PC-3 (cell line): ENCODE measurements at regions of chr3 and their contacts with region 1.

Region 1: GRCh38 chr3:95134693-95135413 is 1072.0 kb downstream of the NSUN3 start:
- DNase-seq: peak; percentile 10
- ATAC-seq: no peak
- H3K4me3 ChIP-seq: no peak overlapping the region
- H3K27ac ChIP-seq: no peak overlapping the region
- H3K4me1 ChIP-seq: no peaks in the 10 kb centered on the region
- H3K27me3 ChIP-seq: no peaks in the 10 kb centered on the region
- CTCF ChIP-seq: 0 out of 2 replicates have a peak, but pooled peaks have one; percentile 15

Region 2: DNA sequence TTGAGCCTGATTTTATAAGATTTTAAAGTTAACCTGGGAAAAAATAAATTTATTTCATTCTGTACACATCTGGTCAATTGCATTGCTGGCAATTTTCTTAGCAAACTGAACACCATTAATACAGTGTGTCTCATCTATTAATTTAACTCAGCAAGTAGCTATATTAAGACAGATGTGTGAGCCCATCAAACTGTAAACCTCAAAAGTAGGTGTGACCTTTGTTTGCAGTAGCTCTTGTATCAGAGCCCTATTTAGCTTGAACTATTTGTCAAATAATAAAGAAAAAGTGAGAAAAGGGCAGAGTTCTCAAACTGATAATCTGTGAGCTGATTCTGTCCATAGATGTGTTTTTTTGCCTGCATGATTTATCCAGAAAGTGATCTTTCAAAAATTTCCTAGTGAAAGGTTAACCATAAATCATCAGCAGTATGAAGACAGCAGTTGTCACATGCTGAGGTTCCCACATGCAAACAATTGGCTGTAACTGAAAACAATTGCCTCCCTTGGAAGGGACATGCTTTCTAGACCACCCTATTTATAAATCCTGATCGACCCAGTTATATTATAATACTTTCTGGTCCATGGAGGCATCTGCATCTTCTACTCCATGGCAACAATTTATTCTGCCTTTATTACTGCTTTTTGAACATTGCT is 425.5 kb before region 1 on chr3:
- CTCF ChIA-PET with region 1: no interaction called
- POLR2A ChIA-PET with region 1: no interaction called
- intact Hi-C with region 1: no loop called
- DNase-seq: no peak
- ATAC-seq: no peak
- H3K4me3 ChIP-seq: no peak overlapping the region
- H3K27ac ChIP-seq: no peak overlapping the region
- H3K4me1 ChIP-seq: no peaks in the 10 kb centered on the region
- H3K27me3 ChIP-seq: no peaks in the 10 kb centered on the region
- CTCF ChIP-seq: no peak

Region 3: DNA sequence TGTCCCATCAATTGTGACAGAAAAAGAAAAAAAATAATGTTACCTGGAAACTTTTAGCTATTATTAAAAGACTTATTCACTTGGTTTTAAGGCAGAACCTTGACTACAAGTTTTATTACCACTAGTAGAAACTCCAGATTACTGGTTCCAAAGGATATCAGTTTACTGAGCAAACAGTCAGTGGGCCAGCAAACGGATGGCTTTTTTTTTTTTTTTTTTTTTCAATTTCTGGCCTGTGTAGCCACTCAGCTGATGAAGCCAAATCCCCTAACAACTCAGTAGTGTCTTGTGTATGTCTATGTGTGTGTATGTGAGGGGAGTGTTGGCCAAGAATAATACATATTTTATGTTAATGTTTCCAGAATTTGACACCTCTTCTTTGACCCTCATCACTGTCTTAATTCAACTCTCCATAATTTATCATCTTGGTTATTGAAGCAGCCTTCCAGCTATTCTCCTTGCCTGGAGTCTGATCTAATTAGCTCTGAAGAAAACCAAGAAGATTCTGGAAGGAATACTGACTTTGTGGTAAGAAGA is 347.1 kb before region 1 on chr3:
- CTCF ChIA-PET with region 1: no interaction called
- POLR2A ChIA-PET with region 1: no interaction called
- intact Hi-C with region 1: loop called (anchors 10 kb)
- DNase-seq: peak; percentile 18
- ATAC-seq: peak; percentile 67
- H3K4me3 ChIP-seq: no peak overlapping the region
- H3K27ac ChIP-seq: no peak overlapping the region
- H3K4me1 ChIP-seq: no peaks in the 10 kb centered on the region; the same call in 1 of the 2 replicates
- H3K27me3 ChIP-seq: no peaks in the 10 kb centered on the region
- CTCF ChIP-seq: no peak

Region 4: DNA sequence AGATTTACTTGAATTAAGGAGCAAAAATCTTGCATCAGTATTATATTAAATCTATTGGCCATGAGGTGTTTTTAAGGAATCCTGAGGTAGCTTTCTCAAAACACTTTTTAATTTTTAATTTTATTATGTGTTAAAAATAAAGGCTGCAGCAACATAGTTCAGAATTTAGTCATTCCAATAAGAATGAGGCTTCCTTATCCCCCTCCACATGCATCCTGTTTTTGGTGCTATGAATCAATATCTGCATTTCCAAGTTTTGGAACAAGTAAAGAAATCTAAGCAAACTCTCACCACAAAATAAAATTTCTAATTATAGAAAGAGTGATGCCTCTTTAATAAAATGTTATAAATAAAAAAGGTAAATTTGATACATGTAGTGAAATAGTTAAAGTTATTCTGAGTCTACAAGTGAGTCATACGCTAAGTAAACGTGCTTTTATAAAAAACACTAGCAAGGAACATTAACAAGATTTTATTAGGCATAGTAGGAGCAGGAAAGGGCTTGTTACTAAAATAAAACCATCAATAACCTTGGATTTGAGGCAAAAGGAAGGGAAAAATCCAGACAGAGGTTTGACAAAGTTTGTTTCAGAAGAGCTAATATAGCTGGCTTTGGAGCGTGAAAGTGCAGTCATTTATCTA is 146.0 kb after region 1 on chr3:
- CTCF ChIA-PET with region 1: no interaction called
- POLR2A ChIA-PET with region 1: no interaction called
- intact Hi-C with region 1: loop called (anchors 5 kb)
- DNase-seq: peak; percentile 59
- ATAC-seq: peak; percentile 94
- H3K4me3 ChIP-seq: no peak overlapping the region
- H3K27ac ChIP-seq: peak overlapping the region; percentile 52
- H3K4me1 ChIP-seq: peaks cover 15% of the 10 kb centered on the region
- H3K27me3 ChIP-seq: no peaks in the 10 kb centered on the region
- CTCF ChIP-seq: no peak